ENCODE measurements at regions of chr5 and their contacts with region 1.

Region 1: DNA sequence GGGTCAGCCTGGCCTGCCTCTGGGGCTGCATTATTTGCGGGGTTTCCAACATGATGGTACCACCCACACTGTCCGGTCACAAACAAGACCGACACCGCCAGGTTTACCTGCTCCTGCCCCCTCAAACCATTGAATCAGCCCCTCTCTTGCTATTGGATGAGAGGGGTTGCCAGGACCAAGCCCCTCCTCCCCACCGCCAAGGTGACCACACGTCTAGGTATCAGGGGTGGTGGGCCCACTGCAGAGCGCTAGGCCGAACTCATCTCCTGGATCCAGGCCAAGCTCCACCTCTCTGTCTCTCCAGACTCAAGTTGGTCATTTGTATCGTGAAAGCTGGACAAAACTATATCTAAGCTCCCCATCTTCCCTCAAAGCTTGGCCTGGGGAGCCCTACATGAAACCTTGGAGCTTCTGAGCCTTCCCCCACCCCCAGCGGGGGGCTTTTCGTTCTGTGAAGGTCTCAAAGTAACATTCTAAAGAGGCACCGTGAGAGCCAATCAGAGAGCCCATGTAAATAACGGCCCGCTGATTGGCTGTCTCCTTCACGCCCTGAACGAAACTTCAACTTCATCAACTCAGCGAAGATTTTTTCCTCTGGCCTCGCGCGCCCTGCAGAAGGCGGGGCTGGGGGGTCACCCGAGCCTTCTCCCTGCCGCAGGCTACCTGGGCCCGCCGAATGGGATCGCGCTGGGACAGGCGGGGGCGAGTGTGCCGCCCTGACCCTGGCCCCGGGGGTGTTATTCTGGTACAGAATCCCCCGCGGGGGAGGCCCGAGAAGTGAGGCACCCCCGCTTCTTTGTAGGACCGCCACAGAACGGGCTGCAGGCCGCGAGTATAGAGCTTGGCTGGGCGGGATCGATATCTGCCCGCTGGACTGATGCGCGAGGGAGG is 49.6 kb upstream of the PSD2 start:
- DNase-seq: peak; percentile 70 to 81
- H3K4me3 ChIP-seq: peak overlapping the region; percentile 38; the same call in 1 of the 2 replicates
- H3K27ac ChIP-seq: no peak overlapping the region
- H3K4me1 ChIP-seq: peaks cover 27% of the 10 kb centered on the region
- H3K27me3 ChIP-seq: peaks cover 20% of the 10 kb centered on the region
- CTCF ChIP-seq: no peak

Region 2: DNA sequence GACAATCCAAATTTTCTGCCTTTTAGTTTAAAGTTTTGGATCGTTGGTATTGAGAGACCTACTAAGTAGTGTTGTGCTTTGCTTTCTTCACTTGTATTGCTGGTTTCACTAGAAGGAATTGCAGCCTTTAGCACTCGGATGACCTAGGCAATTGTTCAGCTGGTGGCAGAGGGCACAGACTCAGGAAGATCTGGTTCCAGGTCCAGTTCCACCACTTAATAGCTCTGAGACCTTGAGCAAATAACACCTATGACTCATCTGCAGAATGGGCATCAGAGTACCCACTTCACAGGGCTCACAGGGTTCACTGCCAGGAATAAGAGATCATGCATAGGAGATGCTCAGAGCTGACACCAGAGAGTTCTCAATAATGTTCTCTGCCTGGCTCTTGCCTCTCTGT is 681.5 kb before region 1 on chr5:
- CTCF ChIA-PET with region 1: no interaction called
- POLR2A ChIA-PET with region 1: no interaction called
- intact Hi-C with region 1: no loop called
- DNase-seq: peak; percentile 35 to 88
- H3K4me3 ChIP-seq: no peak overlapping the region
- H3K27ac ChIP-seq: peak overlapping the region; percentile 42; the same call in 1 of the 2 replicates
- H3K4me1 ChIP-seq: peaks cover 38% of the 10 kb centered on the region
- H3K27me3 ChIP-seq: no peaks in the 10 kb centered on the region
- CTCF ChIP-seq: no peak

Region 3: DNA sequence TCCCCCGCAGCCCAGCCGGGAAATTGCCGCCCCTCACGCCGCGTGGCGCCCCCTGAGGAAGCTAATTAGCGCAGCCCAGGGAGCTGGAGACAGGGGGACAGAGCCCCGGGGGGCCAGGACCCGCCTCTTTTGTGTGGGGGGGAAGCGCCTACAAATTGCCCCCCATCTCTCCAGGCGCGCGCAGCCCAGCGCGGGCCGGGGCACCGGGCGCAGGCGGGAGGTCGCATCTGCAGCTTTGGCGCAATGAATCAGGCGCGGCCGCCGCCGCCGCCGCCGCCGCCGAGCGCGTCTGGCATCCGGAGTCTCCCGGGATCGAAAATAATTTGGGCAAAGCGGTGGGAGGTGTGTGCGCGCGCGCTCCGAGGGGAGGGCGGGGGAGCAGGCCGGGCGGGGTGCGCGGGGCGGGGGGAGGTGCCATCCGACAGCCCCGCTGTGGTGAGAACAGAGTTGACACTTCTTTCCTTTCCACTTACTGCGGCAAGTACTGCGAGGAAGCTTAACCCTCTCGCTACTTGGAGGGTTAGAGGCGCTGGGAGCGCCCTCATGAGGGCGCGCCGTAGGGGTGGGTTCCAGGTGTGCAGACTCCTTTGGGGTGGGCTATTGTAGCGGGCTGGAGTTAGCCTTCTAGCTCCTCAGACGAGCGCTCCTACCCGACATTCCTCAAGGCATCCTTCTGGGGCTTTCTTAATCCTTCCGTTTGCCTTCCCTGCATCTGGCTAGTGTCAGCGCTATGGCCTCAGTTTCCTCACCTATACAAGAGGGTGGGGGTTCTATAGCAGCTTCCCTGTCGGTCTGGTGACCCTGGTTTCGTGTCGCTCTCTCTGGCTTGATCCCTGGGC is 34.8 kb before region 1 on chr5:
- CTCF ChIA-PET with region 1: interaction called, 5 read pairs
- POLR2A ChIA-PET with region 1: no interaction called
- intact Hi-C with region 1: loop called (anchors 2 kb)
- DNase-seq: peak; percentile 46 to 50
- H3K4me3 ChIP-seq: peak overlapping the region; percentile 71
- H3K27ac ChIP-seq: no peak overlapping the region
- H3K4me1 ChIP-seq: peaks cover 5% of the 10 kb centered on the region
- H3K27me3 ChIP-seq: peaks cover 14% of the 10 kb centered on the region
- CTCF ChIP-seq: no peak; the same call in 1 of the 2 replicates